ENCODE measurements at regions of chr20 and their contacts with region 1.

Region 1: DNA sequence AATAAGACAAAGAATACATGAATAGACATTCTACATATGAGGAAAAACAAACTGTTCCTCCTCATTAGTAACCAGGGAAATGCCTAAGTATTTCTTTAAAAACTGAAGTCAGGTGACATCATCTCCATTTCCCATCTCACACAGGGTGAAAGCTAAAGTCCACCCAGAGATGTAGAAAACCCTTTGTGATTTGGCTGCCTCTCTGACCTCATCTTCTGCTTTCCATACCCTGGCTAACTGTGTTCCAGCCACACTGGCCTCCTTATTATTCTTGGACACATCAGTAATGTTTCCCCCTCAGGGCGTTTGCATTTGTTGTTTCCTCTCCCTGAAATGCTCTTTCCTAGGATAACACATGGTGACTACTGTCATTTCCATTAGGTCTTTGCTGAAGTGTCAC is 40.4 kb downstream of the ESF1 start:
- DNase-seq: no peak
- ATAC-seq: no peak
- H3K4me3 ChIP-seq: no peak overlapping the region
- H3K27ac ChIP-seq: no peak overlapping the region
- H3K4me1 ChIP-seq: no peaks in the 10 kb centered on the region
- H3K27me3 ChIP-seq: no peaks in the 10 kb centered on the region
- CTCF ChIP-seq: no peak
- POLR2A ChIP-seq: no peak
- RAD21 ChIP-seq: no peak

Region 2: DNA sequence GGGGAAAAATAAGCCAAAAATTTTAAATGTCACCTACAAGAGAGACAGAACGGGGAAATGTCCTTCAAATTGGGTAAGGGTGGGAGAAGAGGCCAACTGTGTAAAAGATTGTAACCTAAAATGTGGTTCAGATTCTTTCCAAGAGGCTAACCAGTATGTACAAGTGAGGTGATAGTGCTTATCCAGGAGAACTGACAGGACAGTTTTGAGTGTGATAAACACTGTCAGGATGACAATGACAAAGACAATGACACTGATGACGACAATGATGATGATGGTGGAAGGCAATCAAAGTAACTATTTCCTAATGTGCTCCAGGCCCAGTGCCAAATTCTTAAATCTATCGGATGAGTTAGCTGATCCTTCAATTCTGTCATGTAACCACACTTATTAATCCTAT is 162.9 kb before region 1 on chr20:
- CTCF ChIA-PET with region 1: no interaction called
- POLR2A ChIA-PET with region 1: no interaction called
- dilution Hi-C with region 1: no loop called
- in situ Hi-C with region 1: no loop called
- intact Hi-C with region 1: loop called (anchors 10 kb)
- DNase-seq: no peak
- ATAC-seq: no peak
- H3K4me3 ChIP-seq: no peak overlapping the region
- H3K27ac ChIP-seq: no peak overlapping the region
- H3K4me1 ChIP-seq: no peaks in the 10 kb centered on the region
- H3K27me3 ChIP-seq: no peaks in the 10 kb centered on the region
- CTCF ChIP-seq: no peak
- POLR2A ChIP-seq: no peak
- RAD21 ChIP-seq: no peak